MCF 10A (cell line): ENCODE measurements at regions of chr14 and their contacts with region 1.

Region 1: DNA sequence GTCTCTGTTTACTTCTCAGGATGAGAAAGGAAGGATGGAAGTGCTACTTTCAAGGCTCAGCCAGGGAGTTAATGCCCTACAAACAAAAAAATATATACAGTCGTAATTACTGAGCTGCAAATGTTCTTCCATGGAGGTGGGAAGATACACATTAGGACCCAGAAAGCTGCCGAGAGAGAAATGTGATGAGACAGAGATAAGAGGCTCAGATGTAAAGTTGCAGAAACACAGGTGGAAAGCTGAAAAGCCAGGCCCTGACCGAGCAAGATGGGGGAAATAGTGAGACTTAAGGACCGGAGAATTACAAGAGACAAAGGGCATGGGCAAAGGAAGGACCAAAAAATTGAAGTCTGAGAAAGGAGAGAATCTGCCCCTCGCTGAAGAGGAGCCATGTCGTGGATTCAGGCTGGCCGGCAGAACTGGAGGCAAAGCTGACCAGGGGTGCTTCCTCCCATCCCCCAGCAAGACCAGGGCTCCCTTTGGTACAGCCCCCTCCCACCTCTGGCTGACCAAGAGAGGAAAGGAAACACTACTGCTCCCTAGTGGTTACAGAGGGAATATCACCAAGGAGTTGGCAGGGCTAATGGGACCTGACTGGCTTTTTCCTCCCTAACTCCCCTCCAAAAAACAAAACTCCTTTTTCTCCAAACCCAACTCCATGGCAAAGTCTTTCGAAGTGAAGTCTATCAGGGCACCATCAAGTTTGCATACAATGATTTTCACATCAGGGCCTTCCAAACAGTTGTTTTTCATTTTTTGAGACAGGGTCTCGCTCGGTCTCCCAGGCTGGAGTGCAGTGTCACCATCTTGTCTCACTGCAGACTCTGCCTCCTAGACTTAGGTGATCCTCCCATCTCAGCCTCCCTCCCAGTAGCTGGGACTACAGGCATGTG is 12.1 kb downstream of the ZFHX2 start:
- DNase-seq: peak; percentile 55
- H3K4me3 Mint-ChIP-seq: no peak overlapping the region
- H3K27ac Mint-ChIP-seq: no peak overlapping the region
- H3K4me1 Mint-ChIP-seq: peaks cover 10% of the 10 kb centered on the region
- H3K27me3 Mint-ChIP-seq: no peaks in the 10 kb centered on the region
- CTCF ChIP-seq: peak; percentile 69

Region 2: GRCh38 chr14:23320774-23321571 is 218.5 kb before region 1 on chr14 and contains the start of gene PABPN1:
- CTCF ChIA-PET with region 1: no interaction called
- POLR2A ChIA-PET with region 1: no interaction called
- intact Hi-C with region 1: no loop called
- DNase-seq: peak; percentile 100
- H3K4me3 Mint-ChIP-seq: peak within 1 kb of the TSS; percentile 84
- H3K27ac Mint-ChIP-seq: peak within 1 kb of the TSS; percentile 97
- H3K4me1 Mint-ChIP-seq: peaks cover 11% of the 10 kb centered on the region
- H3K27me3 Mint-ChIP-seq: no peaks in the 10 kb centered on the region
- CTCF ChIP-seq: no peak
- total RNA-seq, gene PABPN1: 153 and 167 TPM in 2 replicates

Region 3: GRCh38 chr14:23528555-23528954 is 10.9 kb before region 1 on chr14:
- CTCF ChIA-PET with region 1: interaction called, 33 read pairs
- POLR2A ChIA-PET with region 1: interaction called, 4 read pairs
- intact Hi-C with region 1: no loop called
- DNase-seq: no peak
- H3K4me3 Mint-ChIP-seq: no peak overlapping the region
- H3K27ac Mint-ChIP-seq: no peak overlapping the region
- H3K4me1 Mint-ChIP-seq: no peaks in the 10 kb centered on the region
- H3K27me3 Mint-ChIP-seq: no peaks in the 10 kb centered on the region
- CTCF ChIP-seq: peak; percentile 7

Region 4: GRCh38 chr14:23555882-23556699 is 16.6 kb after region 1 on chr14 and contains the start of gene THTPA:
- CTCF ChIA-PET with region 1: interaction called, 20 read pairs
- POLR2A ChIA-PET with region 1: interaction called, 4 read pairs
- intact Hi-C with region 1: no loop called
- DNase-seq: peak; percentile 89
- H3K4me3 Mint-ChIP-seq: peak within 1 kb of the TSS; percentile 92
- H3K27ac Mint-ChIP-seq: peak within 1 kb of the TSS; percentile 95
- H3K4me1 Mint-ChIP-seq: peaks cover 13% of the 10 kb centered on the region
- H3K27me3 Mint-ChIP-seq: no peaks in the 10 kb centered on the region
- CTCF ChIP-seq: no peak
- total RNA-seq, gene THTPA: 16.8 and 22.4 TPM in 2 replicates